Activated T-helper 1 cell treated with anti-CD3 and anti-CD28 coated beads, Interleukin-12 subunit alpha, Interleukin-12 subunit beta, Interleukin-2, Interleukin-4 antibody, amounts not matched to agents 30 ng/mL and 10 ng/mL and 1 ng/mL, durations not matched to agents 14 hours and 24 hours and 36 hours (primary cell): ENCODE measurements at regions of chr19 and their contacts with region 1.

Region 1: DNA sequence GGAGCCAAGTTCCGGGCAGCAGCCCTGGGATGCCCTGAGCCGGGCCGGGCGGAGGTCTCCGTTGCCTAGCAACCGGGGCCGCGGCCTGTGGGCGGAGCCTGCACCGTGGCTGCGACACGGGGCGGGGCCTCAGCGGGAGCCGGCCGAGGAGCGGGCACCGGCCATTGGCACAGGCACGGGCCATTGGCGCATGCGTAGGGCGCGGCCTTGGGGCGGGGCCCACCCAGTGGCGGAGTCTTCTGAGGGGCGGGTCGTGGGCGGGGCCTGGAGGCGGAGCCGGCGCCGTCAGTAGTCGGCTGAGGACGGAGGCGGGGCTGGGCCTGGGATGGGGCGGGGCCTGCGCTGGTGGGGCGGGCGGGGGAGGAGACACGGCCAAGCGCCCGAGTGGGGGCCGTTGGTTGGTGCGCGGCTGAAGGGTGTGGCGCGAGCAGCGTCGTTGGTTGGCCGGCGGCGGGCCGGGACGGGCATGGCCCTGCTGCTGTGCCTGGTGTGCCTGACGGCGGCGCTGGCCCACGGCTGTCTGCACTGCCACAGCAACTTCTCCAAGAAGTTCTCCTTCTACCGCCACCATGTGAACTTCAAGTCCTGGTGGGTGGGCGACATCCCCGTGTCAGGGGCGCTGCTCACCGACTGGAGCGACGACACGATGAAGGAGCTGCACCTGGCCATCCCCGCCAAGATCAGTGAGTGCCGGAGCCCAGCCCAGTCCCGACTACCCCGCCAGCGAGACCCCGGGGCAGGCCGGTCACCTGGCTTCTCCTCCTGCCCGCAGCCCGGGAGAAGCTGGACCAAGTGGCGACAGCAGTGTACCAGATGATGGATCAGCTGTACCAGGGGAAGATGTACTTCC is at the start of gene IZUMO4:
- DNase-seq: peak; percentile 99
- H3K4me3 Mint-ChIP-seq: peak within 1 kb of the TSS; percentile 97
- H3K27ac Mint-ChIP-seq: peak within 1 kb of the TSS; percentile 91
- H3K4me1 Mint-ChIP-seq: peaks cover 23% of the 10 kb centered on the region
- H3K27me3 Mint-ChIP-seq: no peaks in the 10 kb centered on the region
- total RNA-seq, gene IZUMO4: 6.7 and 7.1 TPM in 2 replicates

Region 2: DNA sequence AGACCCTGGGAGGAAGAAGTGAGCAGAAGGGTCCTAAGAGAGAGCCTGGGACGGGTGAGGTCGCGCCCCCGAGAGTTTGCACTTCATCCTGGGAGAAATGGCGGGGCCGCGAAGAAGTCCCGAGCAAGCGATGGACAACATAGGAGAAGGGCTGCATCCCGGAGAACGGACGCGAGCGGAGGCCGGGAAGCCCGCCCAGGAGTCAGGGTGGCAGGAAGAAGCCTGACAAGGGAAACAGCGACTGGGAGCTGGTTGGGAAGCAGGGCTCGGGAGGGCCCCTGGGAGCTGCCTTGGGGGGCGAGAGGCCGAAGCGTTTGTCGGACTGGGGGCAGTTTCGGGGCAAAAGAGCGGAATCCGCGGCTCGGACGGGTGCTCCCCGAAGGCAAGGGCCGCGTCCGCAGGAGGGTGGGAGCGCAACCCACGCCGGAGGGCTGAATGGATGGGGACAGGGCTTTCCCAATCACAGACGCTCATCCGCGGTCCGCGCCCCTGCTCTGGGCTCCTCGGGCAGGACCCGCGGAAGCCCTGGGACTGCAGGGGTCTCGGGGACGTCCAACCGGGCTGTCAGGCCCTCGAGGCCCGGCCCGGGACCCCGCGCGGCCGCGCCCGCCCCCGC is 211.9 kb before region 1 on chr19:
- intact Hi-C with region 1: loop called (anchors 1 kb)
- DNase-seq: no peak
- H3K4me3 Mint-ChIP-seq: peak overlapping the region; percentile 99
- H3K27ac Mint-ChIP-seq: peak overlapping the region; percentile 99
- H3K4me1 Mint-ChIP-seq: peaks cover 28% of the 10 kb centered on the region
- H3K27me3 Mint-ChIP-seq: no peaks in the 10 kb centered on the region

Region 3: GRCh38 chr19:2041683-2042484 is 54.8 kb before region 1 on chr19:
- intact Hi-C with region 1: loop called (anchors 1 kb)
- DNase-seq: peak; percentile 99
- H3K4me3 Mint-ChIP-seq: peak overlapping the region; percentile 81
- H3K27ac Mint-ChIP-seq: peak overlapping the region; percentile 87
- H3K4me1 Mint-ChIP-seq: peaks cover 4% of the 10 kb centered on the region
- H3K27me3 Mint-ChIP-seq: no peaks in the 10 kb centered on the region

Region 4: DNA sequence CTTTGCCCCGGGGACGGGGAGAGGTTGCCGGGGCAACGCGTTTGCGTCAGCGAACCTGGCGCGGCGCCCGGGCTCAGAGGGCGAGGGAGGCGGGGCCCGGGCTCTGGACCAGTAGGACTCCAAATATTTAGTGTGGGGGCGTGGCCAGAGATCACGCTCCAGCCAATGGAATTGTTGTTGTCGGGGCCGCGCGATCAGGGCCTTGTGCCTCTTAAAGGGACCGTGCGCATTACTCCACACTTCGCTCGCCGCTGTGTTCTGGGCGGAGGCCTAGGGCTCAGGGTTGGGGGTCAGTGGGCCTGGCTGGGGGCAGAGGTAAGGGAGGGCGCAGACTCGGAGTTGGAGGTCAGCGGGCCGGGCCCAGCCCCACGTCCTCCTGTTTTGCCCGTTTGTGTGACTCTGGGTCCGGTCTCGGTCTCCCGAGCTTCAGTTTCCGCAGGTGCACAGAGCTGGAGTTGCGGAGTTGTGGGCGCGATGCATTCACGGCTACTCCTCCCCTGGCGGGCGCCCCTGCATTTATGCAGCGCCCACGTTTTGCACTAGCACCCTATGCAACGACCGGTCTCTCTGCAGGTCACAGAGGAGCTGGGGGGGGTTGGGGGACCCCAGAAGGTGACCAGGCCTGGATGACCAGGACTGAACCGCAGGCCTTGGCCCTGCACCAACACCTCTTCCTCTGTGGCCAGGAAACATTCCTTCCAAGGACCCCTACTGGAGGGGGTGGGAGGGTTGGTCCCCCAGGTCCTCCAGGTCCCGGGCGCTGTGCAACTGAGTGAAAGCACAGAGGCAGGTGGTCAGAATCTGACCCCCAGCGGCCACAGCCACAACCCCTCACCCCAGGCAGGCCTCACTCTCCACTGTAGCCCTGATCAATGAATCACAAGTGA is 35.0 kb before region 1 on chr19:
- intact Hi-C with region 1: loop called (anchors 1 kb)
- DNase-seq: peak; percentile 99
- H3K4me3 Mint-ChIP-seq: peak overlapping the region; percentile 89
- H3K27ac Mint-ChIP-seq: peak overlapping the region; percentile 92
- H3K4me1 Mint-ChIP-seq: peaks cover 17% of the 10 kb centered on the region
- H3K27me3 Mint-ChIP-seq: no peaks in the 10 kb centered on the region

Region 5: GRCh38 chr19:2236314-2237050 is 139.8 kb after region 1 on chr19 and contains the starts of genes PLEKHJ1 and SF3A2:
- intact Hi-C with region 1: loop called (anchors 1 kb)
- DNase-seq: peak; percentile 97
- H3K4me3 Mint-ChIP-seq: peak within 1 kb of the TSS; percentile 97
- H3K27ac Mint-ChIP-seq: peak within 1 kb of the TSS; percentile 96
- H3K4me1 Mint-ChIP-seq: peaks cover 56% of the 10 kb centered on the region
- H3K27me3 Mint-ChIP-seq: peaks cover 4% of the 10 kb centered on the region
- total RNA-seq, gene PLEKHJ1: 67.5 and 68.2 TPM in 2 replicates
- total RNA-seq, gene SF3A2: 153 and 169 TPM in 2 replicates